Caco-2 (cell line): ENCODE measurements at regions of chr12 and their contacts with region 1.

Region 1: DNA sequence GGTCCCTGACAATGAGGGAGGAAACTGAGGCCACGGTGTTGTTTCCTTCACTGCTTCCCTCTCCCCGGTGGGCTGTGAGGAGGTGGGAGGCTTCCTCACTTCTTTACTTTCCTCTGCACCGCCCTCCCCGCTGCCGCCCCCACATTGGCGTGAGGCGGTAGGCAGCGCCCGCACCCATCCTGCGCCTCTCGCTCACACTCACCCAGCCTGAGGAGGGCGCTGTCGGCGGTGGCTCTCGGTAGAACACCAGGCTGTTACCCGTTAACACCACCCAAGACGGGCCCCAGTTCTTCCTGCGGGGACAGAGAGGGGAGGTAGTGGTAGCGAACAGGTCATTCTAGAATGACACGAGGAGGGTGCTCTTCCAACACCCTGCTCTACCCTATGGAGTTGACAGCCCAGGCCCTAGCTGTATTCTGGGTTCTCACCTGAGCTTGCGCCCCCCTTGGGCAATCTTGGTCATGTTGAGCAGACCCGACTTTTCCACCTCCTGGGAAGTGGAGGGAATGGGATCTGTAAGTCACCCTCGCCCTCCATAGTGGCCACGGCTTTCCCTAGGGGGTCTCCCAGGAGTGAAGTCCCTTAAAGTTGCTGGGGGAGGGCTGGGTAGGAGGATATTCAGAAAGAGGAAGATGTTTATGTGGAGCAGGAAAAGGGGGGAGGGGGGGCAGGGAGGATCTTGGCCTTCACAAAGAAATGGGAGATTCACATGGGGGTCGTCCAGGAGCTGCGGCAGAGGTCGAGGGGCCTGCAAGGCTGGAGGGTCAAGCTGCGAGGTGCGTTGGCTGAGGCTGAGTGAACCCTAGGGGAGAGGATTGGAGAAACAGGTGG is 3.3 kb downstream of the ARHGAP9 start:
- DNase-seq: no peak
- H3K4me3 ChIP-seq: peak overlapping the region; percentile 16
- H3K4me3 Mint-ChIP-seq: peak overlapping the region; percentile 54
- H3K27ac Mint-ChIP-seq: no peak overlapping the region
- H3K4me1 ChIP-seq: no peaks in the 10 kb centered on the region
- H3K4me1 Mint-ChIP-seq: no peaks in the 10 kb centered on the region
- H3K27me3 ChIP-seq: no peaks in the 10 kb centered on the region
- H3K27me3 Mint-ChIP-seq: peaks cover 15% of the 10 kb centered on the region
- CTCF ChIP-seq: no peak

Region 2: GRCh38 chr12:57093410-57094217 is 382.8 kb before region 1 on chr12:
- CTCF ChIA-PET with region 1: no interaction called
- POLR2A ChIA-PET with region 1: no interaction called
- intact Hi-C with region 1: no loop called
- DNase-seq: peak; percentile 59 to 73
- H3K4me3 ChIP-seq: no peak overlapping the region
- H3K4me3 Mint-ChIP-seq: peak overlapping the region; percentile 35
- H3K27ac Mint-ChIP-seq: peak overlapping the region; percentile 71
- H3K4me1 ChIP-seq: peaks cover 6% of the 10 kb centered on the region; the same call in 1 of the 2 replicates
- H3K4me1 Mint-ChIP-seq: peaks cover 19% of the 10 kb centered on the region
- H3K27me3 ChIP-seq: no peaks in the 10 kb centered on the region
- H3K27me3 Mint-ChIP-seq: no peaks in the 10 kb centered on the region
- CTCF ChIP-seq: peak; percentile 55 to 64

Region 3: DNA sequence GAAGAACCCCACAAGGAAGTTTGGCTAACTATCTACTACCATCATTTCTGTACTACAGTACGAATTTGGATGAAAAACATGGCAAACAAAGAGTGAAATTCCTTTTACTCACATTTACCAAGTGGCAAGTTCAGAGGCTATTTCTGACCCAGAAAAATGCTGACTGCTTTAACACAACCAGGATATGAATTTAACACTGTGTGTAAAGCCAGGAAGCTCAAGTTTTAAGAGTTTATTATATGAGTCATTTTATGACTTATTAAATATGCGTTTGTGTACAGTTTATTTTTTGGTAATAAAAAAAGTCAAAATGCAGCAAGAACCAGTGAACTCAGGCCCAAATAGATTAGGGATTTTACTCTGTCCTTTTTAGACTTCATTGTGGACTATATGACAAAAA is 167.0 kb before region 1 on chr12:
- CTCF ChIA-PET with region 1: no interaction called
- POLR2A ChIA-PET with region 1: interaction called, 11 read pairs
- intact Hi-C with region 1: no loop called
- DNase-seq: no peak
- H3K4me3 ChIP-seq: no peak overlapping the region
- H3K4me3 Mint-ChIP-seq: no peak overlapping the region
- H3K27ac Mint-ChIP-seq: no peak overlapping the region
- H3K4me1 ChIP-seq: no peaks in the 10 kb centered on the region
- H3K4me1 Mint-ChIP-seq: no peaks in the 10 kb centered on the region
- H3K27me3 ChIP-seq: no peaks in the 10 kb centered on the region
- H3K27me3 Mint-ChIP-seq: no peaks in the 10 kb centered on the region
- CTCF ChIP-seq: no peak

Region 4: GRCh38 chr12:57498132-57498502 is 21.7 kb after region 1 on chr12:
- CTCF ChIA-PET with region 1: no interaction called
- POLR2A ChIA-PET with region 1: no interaction called
- intact Hi-C with region 1: no loop called
- DNase-seq: no peak
- H3K4me3 ChIP-seq: no peak overlapping the region
- H3K4me3 Mint-ChIP-seq: no peak overlapping the region
- H3K27ac Mint-ChIP-seq: peak overlapping the region; percentile 39
- H3K4me1 ChIP-seq: no peaks in the 10 kb centered on the region
- H3K4me1 Mint-ChIP-seq: peaks cover 10% of the 10 kb centered on the region
- H3K27me3 ChIP-seq: no peaks in the 10 kb centered on the region
- H3K27me3 Mint-ChIP-seq: no peaks in the 10 kb centered on the region
- CTCF ChIP-seq: no peak